ENCODE measurements at regions of chr13 and their contacts with region 1.

Region 1: DNA sequence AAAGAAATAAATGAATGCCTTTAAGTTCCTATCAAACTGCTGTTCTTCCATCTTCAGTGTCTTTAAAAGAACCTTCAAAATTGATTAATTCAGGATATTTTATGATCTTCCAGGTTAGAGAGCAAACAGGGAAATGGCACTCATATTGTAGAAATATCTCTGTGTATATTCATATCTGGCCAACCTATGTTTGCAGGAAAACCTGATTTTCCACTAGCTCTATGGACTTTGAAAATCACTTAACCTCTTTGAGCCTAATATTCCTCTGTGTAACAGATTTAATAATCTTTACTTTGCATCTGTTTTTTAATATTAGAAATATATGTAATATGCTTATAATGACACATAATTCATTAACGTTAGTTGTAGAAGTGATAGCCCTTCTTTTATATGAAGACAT is 227.7 kb upstream of the ATXN8OS start:
- DNase-seq: no peak
- H3K4me3 ChIP-seq: no peak overlapping the region
- H3K27ac ChIP-seq: no peak overlapping the region
- H3K4me1 ChIP-seq: no peaks in the 10 kb centered on the region
- H3K27me3 ChIP-seq: no peaks in the 10 kb centered on the region
- CTCF ChIP-seq: no peak
- POLR2A ChIP-seq: no peak

Region 2: GRCh38 chr13:69654392-69654791 is 225.5 kb before region 1 on chr13:
- intact Hi-C with region 1: loop called (anchors 10 kb)
- DNase-seq: no peak
- H3K4me3 ChIP-seq: no peak overlapping the region
- H3K27ac ChIP-seq: no peak overlapping the region
- H3K4me1 ChIP-seq: no peaks in the 10 kb centered on the region
- H3K27me3 ChIP-seq: no peaks in the 10 kb centered on the region
- CTCF ChIP-seq: no peak
- POLR2A ChIP-seq: no peak

Region 3: DNA sequence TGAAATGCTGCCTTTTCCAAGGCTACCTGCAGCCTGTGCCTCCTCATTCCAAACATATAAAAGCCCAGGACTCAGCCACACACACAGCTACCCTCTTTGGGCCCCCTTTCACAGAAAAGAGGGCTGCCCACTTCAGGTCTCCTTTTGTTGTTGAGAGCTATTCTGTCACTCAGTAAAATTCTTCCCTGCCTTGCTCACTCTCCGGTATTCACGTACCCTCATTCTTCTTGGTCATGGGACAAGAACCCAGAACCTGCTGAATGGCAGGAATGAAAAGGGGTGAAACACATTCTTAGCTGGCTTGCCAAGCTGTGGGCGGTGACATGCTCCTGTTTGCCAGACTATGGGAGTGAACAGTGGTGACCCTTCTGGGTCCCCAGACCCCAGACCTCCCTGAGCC is 110.3 kb before region 1 on chr13:
- intact Hi-C with region 1: no loop called
- DNase-seq: no peak
- H3K4me3 ChIP-seq: no peak overlapping the region
- H3K27ac ChIP-seq: no peak overlapping the region
- H3K4me1 ChIP-seq: no peaks in the 10 kb centered on the region
- H3K27me3 ChIP-seq: no peaks in the 10 kb centered on the region
- CTCF ChIP-seq: no peak
- POLR2A ChIP-seq: no peak

Region 4: GRCh38 chr13:69928262-69928661 is 48.3 kb after region 1 on chr13:
- intact Hi-C with region 1: no loop called
- DNase-seq: no peak
- H3K4me3 ChIP-seq: no peak overlapping the region
- H3K27ac ChIP-seq: no peak overlapping the region
- H3K4me1 ChIP-seq: no peaks in the 10 kb centered on the region
- H3K27me3 ChIP-seq: no peaks in the 10 kb centered on the region
- CTCF ChIP-seq: no peak
- POLR2A ChIP-seq: no peak